Naive thymus-derived CD4-positive, alpha-beta T cell (primary cell): ENCODE measurements at regions of chr5 and their contacts with region 1.

Region 1: GRCh38 chr5:68252673-68253623 is 37.4 kb downstream of the PIK3R1 start:
- DNase-seq: peak in 5 of 9 donors; percentile 31 to 43 (median 33)
- ATAC-seq: peak; percentile 53
- H3K4me3 ChIP-seq: no peak overlapping the region
- H3K4me3 Mint-ChIP-seq: peak overlapping the region in 5 of 10 donors; percentile 1 to 79 (median 57)
- H3K27ac ChIP-seq: peak overlapping the region; percentile 60
- H3K27ac Mint-ChIP-seq: peak overlapping the region in 8 of 9 donors; percentile 53 to 95 (median 92)
- H3K4me1 ChIP-seq: peaks cover 67 to 77% of the 10 kb centered on the region in 2 donors
- H3K4me1 Mint-ChIP-seq: peaks cover 71 to 98% (median 94%) of the 10 kb centered on the region in 7 donors
- H3K27me3 ChIP-seq: no peaks in the 10 kb centered on the region
- H3K27me3 Mint-ChIP-seq: no peaks in the 10 kb centered on the region

Region 2: GRCh38 chr5:67493676-67494075 is 759.3 kb before region 1 on chr5:
- CTCF ChIA-PET with region 1: interaction called, 3 read pairs
- POLR2A ChIA-PET with region 1: interaction called, 3 read pairs
- intact Hi-C with region 1: loop called in 1 of 2 experiments (anchors 2 kb)
- DNase-seq: peak in 1 of 9 donors; percentile 13
- ATAC-seq: peak; percentile 29
- H3K4me3 ChIP-seq: no peak overlapping the region
- H3K4me3 Mint-ChIP-seq: no peak overlapping the region
- H3K27ac ChIP-seq: no peak overlapping the region
- H3K27ac Mint-ChIP-seq: peak overlapping the region in 1 of 9 donors; percentile 44
- H3K4me1 ChIP-seq: no peaks in the 10 kb centered on the region
- H3K4me1 Mint-ChIP-seq: peaks cover 0 to 27% (median 6%) of the 10 kb centered on the region in 7 donors
- H3K27me3 ChIP-seq: no peaks in the 10 kb centered on the region
- H3K27me3 Mint-ChIP-seq: no peaks in the 10 kb centered on the region

Region 3: GRCh38 chr5:67724412-67725135 is 528.4 kb before region 1 on chr5:
- CTCF ChIA-PET with region 1: no interaction called
- POLR2A ChIA-PET with region 1: no interaction called
- intact Hi-C with region 1: loop called in 1 of 2 experiments (anchors 10 kb)
- DNase-seq: no peak
- ATAC-seq: no peak
- H3K4me3 ChIP-seq: no peak overlapping the region
- H3K4me3 Mint-ChIP-seq: no peak overlapping the region
- H3K27ac ChIP-seq: no peak overlapping the region
- H3K27ac Mint-ChIP-seq: no peak overlapping the region
- H3K4me1 ChIP-seq: no peaks in the 10 kb centered on the region
- H3K4me1 Mint-ChIP-seq: no peaks in the 10 kb centered on the region
- H3K27me3 ChIP-seq: no peaks in the 10 kb centered on the region
- H3K27me3 Mint-ChIP-seq: peaks cover 0 to 4% (median 0%) of the 10 kb centered on the region in 5 donors

Region 4: GRCh38 chr5:68272289-68272688 is 19.3 kb after region 1 on chr5:
- CTCF ChIA-PET with region 1: interaction called, 13 read pairs
- POLR2A ChIA-PET with region 1: interaction called, 39 read pairs
- intact Hi-C with region 1: loop called (anchors 1 to 2 kb)
- DNase-seq: peak in 3 of 9 donors; percentile 32 to 45 (median 37)
- ATAC-seq: no peak
- H3K4me3 ChIP-seq: no peak overlapping the region
- H3K4me3 Mint-ChIP-seq: peak overlapping the region in 2 of 10 donors; percentile 13 to 17
- H3K27ac ChIP-seq: no peak overlapping the region
- H3K27ac Mint-ChIP-seq: peak overlapping the region in 8 of 9 donors; percentile 4 to 95 (median 58)
- H3K4me1 ChIP-seq: peaks cover 68 to 80% of the 10 kb centered on the region in 2 donors
- H3K4me1 Mint-ChIP-seq: peaks cover 33 to 92% (median 80%) of the 10 kb centered on the region in 7 donors
- H3K27me3 ChIP-seq: no peaks in the 10 kb centered on the region
- H3K27me3 Mint-ChIP-seq: no peaks in the 10 kb centered on the region

Region 5: GRCh38 chr5:68343421-68343826 is 90.5 kb after region 1 on chr5:
- CTCF ChIA-PET with region 1: no interaction called
- POLR2A ChIA-PET with region 1: no interaction called
- intact Hi-C with region 1: no loop called
- DNase-seq: peak in 1 of 9 donors; percentile 30
- ATAC-seq: no peak
- H3K4me3 ChIP-seq: no peak overlapping the region
- H3K4me3 Mint-ChIP-seq: no peak overlapping the region
- H3K27ac ChIP-seq: no peak overlapping the region
- H3K27ac Mint-ChIP-seq: no peak overlapping the region
- H3K4me1 ChIP-seq: peaks cover 0 to 4% of the 10 kb centered on the region in 2 donors
- H3K4me1 Mint-ChIP-seq: peaks cover 0 to 26% (median 9%) of the 10 kb centered on the region in 7 donors
- H3K27me3 ChIP-seq: no peaks in the 10 kb centered on the region
- H3K27me3 Mint-ChIP-seq: peaks cover 0 to 17% (median 0%) of the 10 kb centered on the region in 5 donors

Region 6: GRCh38 chr5:68720884-68721610 is 468.1 kb after region 1 on chr5:
- CTCF ChIA-PET with region 1: no interaction called
- POLR2A ChIA-PET with region 1: no interaction called
- intact Hi-C with region 1: no loop called
- DNase-seq: no peak
- ATAC-seq: no peak
- H3K4me3 ChIP-seq: no peak overlapping the region
- H3K4me3 Mint-ChIP-seq: no peak overlapping the region
- H3K27ac ChIP-seq: no peak overlapping the region
- H3K27ac Mint-ChIP-seq: no peak overlapping the region
- H3K4me1 ChIP-seq: no peaks in the 10 kb centered on the region
- H3K4me1 Mint-ChIP-seq: peaks cover 0 to 3% (median under 1%) of the 10 kb centered on the region in 7 donors
- H3K27me3 ChIP-seq: no peaks in the 10 kb centered on the region
- H3K27me3 Mint-ChIP-seq: peaks cover 0 to 5% (median 0%) of the 10 kb centered on the region in 5 donors